HAP-1 (cell line): ENCODE measurements at regions of chr2 and their contacts with region 1.

Region 1: DNA sequence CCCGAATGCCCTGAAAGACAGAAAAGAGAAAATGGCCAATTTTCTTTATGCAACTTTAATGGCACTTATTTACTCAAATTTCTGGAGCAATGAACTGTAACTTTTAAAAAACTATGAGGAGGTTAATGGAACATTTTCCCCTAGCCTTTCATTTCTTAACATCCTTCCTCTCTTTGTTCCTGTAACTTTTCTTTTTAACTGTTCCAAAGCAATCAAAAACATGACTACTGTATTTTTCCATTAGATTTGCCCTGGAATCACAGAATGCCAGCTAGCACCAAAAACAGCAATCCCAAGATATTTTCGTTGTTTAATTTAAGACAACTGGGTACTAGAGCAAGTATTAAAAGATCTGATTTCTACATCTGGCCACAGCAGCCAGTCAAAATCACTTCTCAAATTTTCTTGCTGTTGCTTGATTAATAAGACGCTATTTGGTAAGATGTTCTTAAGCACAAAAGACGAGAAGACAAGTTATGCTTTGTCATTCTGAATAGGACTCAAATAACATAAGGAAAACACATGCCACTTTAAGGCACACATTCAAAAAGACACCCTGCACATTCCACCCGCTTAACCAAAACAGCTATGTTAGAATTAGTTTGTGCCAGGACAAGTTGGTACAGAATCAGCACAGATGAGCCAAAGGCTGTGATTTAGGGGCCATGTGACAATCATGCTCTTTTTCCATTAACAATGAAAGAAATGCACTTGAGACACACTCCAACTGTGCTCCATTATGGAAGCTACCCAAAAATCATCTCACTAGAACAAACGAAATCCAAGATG is 3.6 kb downstream of the STARD7 start:
- DNase-seq: peak in 1 of 2 experiments; percentile 36
- H3K4me3 ChIP-seq: peak overlapping the region; percentile 1; the same call in 1 of the 2 replicates
- H3K4me1 ChIP-seq: peaks cover 36% of the 10 kb centered on the region
- H3K27me3 ChIP-seq: no peaks in the 10 kb centered on the region

Region 2: DNA sequence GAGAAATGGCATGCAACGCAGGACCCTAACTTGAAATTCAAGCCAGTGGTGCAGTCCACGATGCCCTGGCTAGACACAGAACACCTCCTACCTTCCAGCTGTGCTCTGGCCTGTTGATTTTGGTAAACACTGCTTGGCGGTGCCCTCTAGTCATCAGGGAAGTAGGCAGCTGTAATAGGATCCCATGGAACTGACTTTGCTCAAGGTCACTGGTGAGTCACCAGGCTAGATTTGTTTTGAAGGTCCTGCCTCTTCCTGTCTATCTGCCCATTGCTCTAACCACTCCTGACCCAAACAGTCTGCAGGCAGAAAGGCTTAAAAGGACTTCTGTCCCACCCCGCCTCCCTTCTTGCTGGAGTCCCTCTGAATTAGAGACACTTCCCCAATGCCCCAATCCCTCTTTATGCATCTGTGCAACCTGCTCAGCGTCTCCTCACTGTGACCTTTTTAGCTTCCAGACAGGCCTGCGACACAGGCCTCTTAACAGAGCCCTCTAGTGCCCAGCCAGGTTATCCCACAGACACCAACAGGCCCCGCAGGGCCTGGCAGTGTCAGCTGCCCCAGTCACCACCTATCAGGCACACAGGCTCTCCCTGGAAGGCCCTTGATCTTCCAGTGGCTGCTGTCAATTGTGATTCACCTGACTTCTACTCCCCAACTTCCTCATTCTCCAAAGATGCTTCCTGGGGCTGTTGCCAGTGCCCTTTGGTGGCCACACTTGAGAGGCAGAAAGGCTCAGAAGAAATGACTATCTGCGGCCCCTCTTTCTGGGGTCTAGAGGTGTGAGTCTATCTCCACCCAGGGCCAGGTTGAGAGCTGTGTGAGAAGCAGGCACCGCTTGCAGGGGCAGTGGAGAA is 55.6 kb after region 1 on chr2:
- in situ Hi-C with region 1: loop called (anchors 5 kb)
- DNase-seq: peak; percentile 15 to 58
- H3K4me3 ChIP-seq: no peak overlapping the region
- H3K4me1 ChIP-seq: peaks cover 12% of the 10 kb centered on the region
- H3K27me3 ChIP-seq: no peaks in the 10 kb centered on the region